B cell (primary cell): ENCODE measurements at regions of chr15 and their contacts with region 1.

Region 1: GRCh38 chr15:100918034-100918689 is 995 bp upstream of the LRRK1 start:
- DNase-seq: peak; percentile 84
- ATAC-seq: peak; percentile 72
- H3K4me3 ChIP-seq: peak overlapping the region; percentile 71 to 89 (median 87)
- H3K4me3 Mint-ChIP-seq: peak overlapping the region; percentile 86
- H3K27ac ChIP-seq: no peak overlapping the region
- H3K27ac Mint-ChIP-seq: peak overlapping the region; percentile 87
- H3K4me1 ChIP-seq: peaks cover 30 to 45% of the 10 kb centered on the region in 2 donors
- H3K4me1 Mint-ChIP-seq: peaks cover 39% of the 10 kb centered on the region
- H3K27me3 ChIP-seq: no peaks in the 10 kb centered on the region
- H3K27me3 Mint-ChIP-seq: peaks cover 2% of the 10 kb centered on the region
- CTCF ChIP-seq: peak; percentile 96

Region 2: DNA sequence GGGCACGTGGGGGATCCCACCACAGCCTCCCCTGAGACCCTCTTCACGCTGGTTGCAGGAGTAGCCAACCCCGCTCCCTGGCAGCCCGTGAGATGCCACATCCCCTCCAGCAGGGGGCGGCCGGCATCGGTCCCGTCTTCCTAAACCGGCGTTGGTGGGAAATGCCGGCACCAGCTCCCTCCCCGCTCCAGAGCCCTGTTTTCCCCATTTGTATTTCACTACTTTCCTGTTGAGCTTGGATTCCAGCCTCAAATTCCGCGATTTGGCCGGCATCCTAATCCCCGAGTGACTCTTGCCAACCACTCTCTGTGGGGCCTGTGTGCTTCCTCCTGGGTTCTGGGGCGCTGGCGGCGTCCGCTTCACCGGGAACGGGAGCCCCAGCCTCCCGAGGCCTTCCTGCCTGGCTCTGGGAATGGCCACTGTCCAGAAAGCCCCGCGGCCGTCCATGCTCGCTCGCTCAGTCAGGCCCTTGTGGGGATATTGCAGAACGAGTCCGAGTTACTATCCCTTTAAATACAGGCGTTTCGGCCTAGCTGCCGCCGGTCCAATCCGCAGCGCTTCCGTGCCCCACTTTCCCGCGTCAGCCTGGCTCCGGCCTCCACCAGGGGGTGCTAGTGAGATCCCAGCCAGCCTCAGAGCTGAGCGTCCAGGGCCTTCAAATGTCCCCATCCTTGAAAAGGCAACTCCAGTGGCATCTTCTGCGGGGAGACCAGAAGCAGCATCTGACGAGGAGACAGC is 568.3 kb before region 1 on chr15:
- CTCF ChIA-PET with region 1: no interaction called
- POLR2A ChIA-PET with region 1: no interaction called
- intact Hi-C with region 1: loop called (anchors 10 kb)
- DNase-seq: peak; percentile 85
- ATAC-seq: peak; percentile 89
- H3K4me3 ChIP-seq: peak overlapping the region; percentile 57 to 96 (median 70)
- H3K4me3 Mint-ChIP-seq: peak overlapping the region; percentile 85
- H3K27ac ChIP-seq: peak overlapping the region; percentile 20 to 28
- H3K27ac Mint-ChIP-seq: peak overlapping the region; percentile 50
- H3K4me1 ChIP-seq: peaks cover 0 to 8% of the 10 kb centered on the region in 2 donors
- H3K4me1 Mint-ChIP-seq: peaks cover 7% of the 10 kb centered on the region
- H3K27me3 ChIP-seq: peaks cover 0 to 32% (median 11%) of the 10 kb centered on the region in 4 experiments
- H3K27me3 Mint-ChIP-seq: peaks cover 24% of the 10 kb centered on the region
- CTCF ChIP-seq: peak; percentile 79

Region 3: GRCh38 chr15:100873029-100873677 is 45.0 kb before region 1 on chr15:
- CTCF ChIA-PET with region 1: interaction called, 4 read pairs
- POLR2A ChIA-PET with region 1: no interaction called
- intact Hi-C with region 1: loop called (anchors 2 kb)
- DNase-seq: peak; percentile 73
- ATAC-seq: peak; percentile 80
- H3K4me3 ChIP-seq: no peak overlapping the region
- H3K4me3 Mint-ChIP-seq: no peak overlapping the region
- H3K27ac ChIP-seq: no peak overlapping the region
- H3K27ac Mint-ChIP-seq: no peak overlapping the region
- H3K4me1 ChIP-seq: no peaks in the 10 kb centered on the region
- H3K4me1 Mint-ChIP-seq: no peaks in the 10 kb centered on the region
- H3K27me3 ChIP-seq: peaks cover 0 to 25% (median 6%) of the 10 kb centered on the region in 4 experiments
- H3K27me3 Mint-ChIP-seq: peaks cover 30% of the 10 kb centered on the region
- CTCF ChIP-seq: peak; percentile 97

Region 4: DNA sequence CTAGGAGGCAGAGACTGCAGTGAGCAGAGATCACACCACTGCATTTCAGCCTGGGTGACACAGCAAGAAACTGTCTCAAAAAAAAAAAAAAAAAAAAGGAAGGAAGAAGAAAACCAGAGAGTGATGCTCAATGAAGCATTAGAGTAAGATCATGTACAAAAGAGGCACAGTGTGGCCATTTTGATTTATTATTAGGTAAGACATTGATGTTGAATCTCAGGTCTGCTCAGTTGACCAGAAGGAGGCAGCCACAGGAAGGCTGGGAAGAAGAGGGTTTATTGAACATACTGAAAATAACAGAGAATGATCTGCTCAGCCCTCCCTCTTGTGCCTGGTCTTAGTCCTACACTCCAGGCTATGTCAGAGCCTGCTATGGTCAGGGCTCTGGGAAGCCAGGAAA is 16.6 kb after region 1 on chr15:
- CTCF ChIA-PET with region 1: interaction called, 41 read pairs
- POLR2A ChIA-PET with region 1: no interaction called
- intact Hi-C with region 1: loop called (anchors 1 kb)
- DNase-seq: peak; percentile 50
- ATAC-seq: peak; percentile 65
- H3K4me3 ChIP-seq: no peak overlapping the region
- H3K4me3 Mint-ChIP-seq: peak overlapping the region; percentile 35
- H3K27ac ChIP-seq: no peak overlapping the region
- H3K27ac Mint-ChIP-seq: peak overlapping the region; percentile 73
- H3K4me1 ChIP-seq: peaks cover 50 to 51% of the 10 kb centered on the region in 2 donors
- H3K4me1 Mint-ChIP-seq: peaks cover 52% of the 10 kb centered on the region
- H3K27me3 ChIP-seq: no peaks in the 10 kb centered on the region
- H3K27me3 Mint-ChIP-seq: no peaks in the 10 kb centered on the region
- CTCF ChIP-seq: no peak

Region 5: DNA sequence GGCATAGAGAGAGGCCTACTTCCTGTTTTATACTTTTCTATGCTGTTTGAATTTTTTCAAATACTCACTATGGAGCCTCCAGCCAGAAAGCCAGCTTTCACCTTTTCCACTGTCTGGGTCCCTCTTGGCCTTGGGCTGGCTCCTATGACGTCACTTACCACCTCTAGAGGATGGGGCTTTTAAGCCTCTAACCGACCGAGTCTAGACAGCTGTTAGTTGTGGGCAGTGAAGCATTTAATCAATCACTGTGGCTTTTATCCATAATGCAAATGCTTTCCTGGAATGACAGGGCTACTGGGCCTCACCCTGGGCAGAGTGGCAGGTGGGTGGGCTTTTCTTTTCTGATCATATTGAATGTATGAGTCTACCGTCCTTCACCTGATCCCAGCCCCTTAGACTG is 62.9 kb after region 1 on chr15:
- CTCF ChIA-PET with region 1: interaction called, 12 read pairs
- POLR2A ChIA-PET with region 1: no interaction called
- intact Hi-C with region 1: no loop called
- DNase-seq: peak; percentile 31
- ATAC-seq: peak; percentile 43
- H3K4me3 ChIP-seq: no peak overlapping the region
- H3K4me3 Mint-ChIP-seq: no peak overlapping the region
- H3K27ac ChIP-seq: no peak overlapping the region
- H3K27ac Mint-ChIP-seq: peak overlapping the region; percentile 43
- H3K4me1 ChIP-seq: peaks cover 0 to 7% of the 10 kb centered on the region in 2 donors
- H3K4me1 Mint-ChIP-seq: peaks cover 16% of the 10 kb centered on the region
- H3K27me3 ChIP-seq: no peaks in the 10 kb centered on the region
- H3K27me3 Mint-ChIP-seq: no peaks in the 10 kb centered on the region
- CTCF ChIP-seq: no peak

Region 6: DNA sequence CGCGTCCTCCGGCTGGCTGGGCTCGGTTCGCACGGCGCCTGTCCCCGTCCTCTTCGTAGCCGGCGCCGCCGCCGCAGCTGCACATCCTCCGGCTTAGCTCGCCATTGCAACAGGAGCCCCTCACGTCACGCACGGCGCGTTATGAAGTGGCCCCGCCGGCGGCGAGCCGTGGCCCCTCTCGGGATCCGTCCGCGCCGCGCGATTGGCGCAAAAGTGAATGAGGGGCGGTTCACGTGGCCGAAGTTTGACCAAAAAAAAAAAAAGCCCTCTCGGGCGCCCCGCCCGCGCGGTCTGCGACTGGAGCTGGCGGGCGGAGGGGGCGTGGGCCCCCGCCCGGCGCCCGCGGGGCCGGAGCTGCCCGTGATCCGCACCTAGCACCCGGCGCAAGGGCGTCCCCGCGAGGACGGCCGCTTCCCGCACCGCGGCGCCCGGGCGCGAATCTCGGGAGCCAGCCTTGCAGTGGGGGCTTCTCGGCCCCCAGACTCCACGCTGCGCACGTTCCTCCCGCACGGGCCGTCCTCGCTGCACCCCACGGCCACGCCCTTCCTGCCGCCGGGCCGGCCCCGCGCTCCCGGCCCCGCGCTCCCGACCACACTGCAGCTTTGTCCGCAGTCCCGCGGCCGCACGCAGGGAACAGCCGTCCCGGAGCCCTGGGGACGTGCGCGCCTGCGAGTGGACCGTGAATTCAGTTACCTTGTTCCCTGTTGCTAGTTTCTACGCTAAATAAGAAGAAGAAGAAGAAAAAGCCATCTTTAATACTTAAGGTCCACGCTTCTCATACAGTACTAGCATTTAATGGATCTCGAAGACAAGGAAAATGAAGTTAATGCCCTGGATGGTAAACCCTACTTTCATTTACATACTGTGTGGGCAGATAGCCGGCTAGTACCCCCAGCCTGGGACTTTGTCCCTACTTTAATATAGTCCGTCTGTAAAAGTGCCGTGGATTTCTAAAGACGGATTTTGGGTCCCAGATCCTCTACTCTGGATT is 334.0 kb after region 1 on chr15 and contains the start of gene CHSY1:
- CTCF ChIA-PET with region 1: interaction called, 6 read pairs
- POLR2A ChIA-PET with region 1: interaction called, 4 read pairs
- intact Hi-C with region 1: loop called (anchors 2 kb)
- DNase-seq: peak; percentile 96
- ATAC-seq: peak; percentile 81
- H3K4me3 ChIP-seq: peak within 1 kb of the TSS; percentile 50 to 81 (median 73)
- H3K4me3 Mint-ChIP-seq: peak within 1 kb of the TSS; percentile 93
- H3K27ac ChIP-seq: peak within 1 kb of the TSS; percentile 30 to 53
- H3K27ac Mint-ChIP-seq: peak within 1 kb of the TSS; percentile 97
- H3K4me1 ChIP-seq: peaks cover 29 to 31% of the 10 kb centered on the region in 2 donors
- H3K4me1 Mint-ChIP-seq: peaks cover 30% of the 10 kb centered on the region
- H3K27me3 ChIP-seq: peaks cover 0 to 4% (median 0%) of the 10 kb centered on the region in 4 experiments
- H3K27me3 Mint-ChIP-seq: no peaks in the 10 kb centered on the region
- CTCF ChIP-seq: no peak
- total RNA-seq, gene CHSY1: 18.9 and 20.3 TPM in 2 replicates

Region 7: GRCh38 chr15:101652098-101652782 is 734.1 kb after region 1 on chr15 and contains the start of gene TM2D3:
- CTCF ChIA-PET with region 1: no interaction called
- POLR2A ChIA-PET with region 1: no interaction called
- intact Hi-C with region 1: loop called (anchors 5 kb)
- DNase-seq: peak; percentile 97
- ATAC-seq: peak; percentile 89
- H3K4me3 ChIP-seq: peak within 1 kb of the TSS; percentile 79 to 94 (median 89)
- H3K4me3 Mint-ChIP-seq: peak within 1 kb of the TSS; percentile 93
- H3K27ac ChIP-seq: peak within 1 kb of the TSS; percentile 94 to 98
- H3K27ac Mint-ChIP-seq: peak within 1 kb of the TSS; percentile 98
- H3K4me1 ChIP-seq: peaks cover 21 to 23% of the 10 kb centered on the region in 2 donors
- H3K4me1 Mint-ChIP-seq: peaks cover 33% of the 10 kb centered on the region
- H3K27me3 ChIP-seq: no peaks in the 10 kb centered on the region
- H3K27me3 Mint-ChIP-seq: no peaks in the 10 kb centered on the region
- CTCF ChIP-seq: peak; percentile 76
- total RNA-seq, gene TM2D3: 56.4 and 63.5 TPM in 2 replicates